B cell (primary cell): ENCODE measurements at regions of chr3 and their contacts with region 1.

Region 1: GRCh38 chr3:160027541-160028195 is 39.0 kb downstream of the IL12A start:
- DNase-seq: no peak
- ATAC-seq: no peak
- H3K4me3 ChIP-seq: no peak overlapping the region
- H3K4me3 Mint-ChIP-seq: no peak overlapping the region
- H3K27ac ChIP-seq: no peak overlapping the region
- H3K27ac Mint-ChIP-seq: no peak overlapping the region
- H3K4me1 ChIP-seq: no peaks in the 10 kb centered on the region
- H3K4me1 Mint-ChIP-seq: no peaks in the 10 kb centered on the region
- H3K27me3 ChIP-seq: no peaks in the 10 kb centered on the region
- H3K27me3 Mint-ChIP-seq: no peaks in the 10 kb centered on the region
- CTCF ChIP-seq: no peak

Region 2: DNA sequence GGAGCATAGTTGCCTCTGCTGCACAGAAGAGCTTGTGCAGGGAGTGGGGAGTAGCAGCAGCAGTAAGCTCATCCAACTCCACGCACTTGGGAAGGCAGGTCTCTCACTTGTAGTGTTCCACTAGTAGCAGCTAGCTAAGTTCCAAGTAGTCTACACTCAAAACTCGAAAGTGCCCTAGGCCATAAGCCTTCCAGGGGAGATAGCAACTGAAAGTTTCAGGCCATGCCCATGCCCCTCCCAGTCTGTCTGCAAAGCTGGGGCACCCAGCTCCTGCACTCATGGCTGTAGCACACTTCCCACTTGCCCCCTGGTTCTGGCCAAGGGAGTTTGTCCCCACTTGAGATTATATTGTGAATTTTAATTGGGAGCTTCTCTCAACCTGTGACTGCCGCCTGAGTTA is 1168.3 kb before region 1 on chr3:
- CTCF ChIA-PET with region 1: no interaction called
- POLR2A ChIA-PET with region 1: no interaction called
- intact Hi-C with region 1: no loop called
- DNase-seq: no peak
- ATAC-seq: no peak
- H3K4me3 ChIP-seq: no peak overlapping the region
- H3K4me3 Mint-ChIP-seq: no peak overlapping the region
- H3K27ac ChIP-seq: no peak overlapping the region
- H3K27ac Mint-ChIP-seq: no peak overlapping the region
- H3K4me1 ChIP-seq: no peaks in the 10 kb centered on the region
- H3K4me1 Mint-ChIP-seq: no peaks in the 10 kb centered on the region
- H3K27me3 ChIP-seq: no peaks in the 10 kb centered on the region
- H3K27me3 Mint-ChIP-seq: peaks cover 4% of the 10 kb centered on the region
- CTCF ChIP-seq: no peak

Region 3: GRCh38 chr3:160372780-160373179 is 345.1 kb after region 1 on chr3:
- CTCF ChIA-PET with region 1: no interaction called
- POLR2A ChIA-PET with region 1: interaction called, 10 read pairs
- intact Hi-C with region 1: no loop called
- DNase-seq: no peak
- ATAC-seq: no peak
- H3K4me3 ChIP-seq: no peak overlapping the region
- H3K4me3 Mint-ChIP-seq: no peak overlapping the region
- H3K27ac ChIP-seq: no peak overlapping the region
- H3K27ac Mint-ChIP-seq: no peak overlapping the region
- H3K4me1 ChIP-seq: no peaks in the 10 kb centered on the region
- H3K4me1 Mint-ChIP-seq: peaks cover 17% of the 10 kb centered on the region
- H3K27me3 ChIP-seq: no peaks in the 10 kb centered on the region
- H3K27me3 Mint-ChIP-seq: no peaks in the 10 kb centered on the region
- CTCF ChIP-seq: no peak

Region 4: DNA sequence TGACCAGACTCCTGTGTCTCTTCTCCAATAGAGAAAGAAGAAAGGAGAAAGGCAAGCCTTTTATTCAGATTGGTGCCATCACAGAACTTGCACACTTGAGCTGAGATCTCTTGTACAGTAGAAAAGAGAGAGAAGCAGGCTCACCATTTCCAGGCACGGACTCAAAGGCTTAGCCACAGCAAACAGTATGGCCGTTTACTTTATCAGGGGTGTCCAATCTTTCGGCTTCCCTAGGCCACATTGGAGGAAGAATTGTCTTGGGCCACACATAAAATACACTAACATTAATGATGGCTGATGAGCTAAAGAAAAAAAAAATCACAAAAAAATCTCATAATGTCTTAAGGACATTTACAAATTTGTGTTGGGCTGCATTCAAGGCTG is 366.3 kb after region 1 on chr3:
- CTCF ChIA-PET with region 1: interaction called, 10 read pairs
- POLR2A ChIA-PET with region 1: no interaction called
- intact Hi-C with region 1: no loop called
- DNase-seq: no peak
- ATAC-seq: no peak
- H3K4me3 ChIP-seq: no peak overlapping the region
- H3K4me3 Mint-ChIP-seq: no peak overlapping the region
- H3K27ac ChIP-seq: no peak overlapping the region
- H3K27ac Mint-ChIP-seq: no peak overlapping the region
- H3K4me1 ChIP-seq: peaks cover 7 to 8% of the 10 kb centered on the region in 2 donors
- H3K4me1 Mint-ChIP-seq: peaks cover 21% of the 10 kb centered on the region
- H3K27me3 ChIP-seq: no peaks in the 10 kb centered on the region
- H3K27me3 Mint-ChIP-seq: no peaks in the 10 kb centered on the region
- CTCF ChIP-seq: no peak

Region 5: DNA sequence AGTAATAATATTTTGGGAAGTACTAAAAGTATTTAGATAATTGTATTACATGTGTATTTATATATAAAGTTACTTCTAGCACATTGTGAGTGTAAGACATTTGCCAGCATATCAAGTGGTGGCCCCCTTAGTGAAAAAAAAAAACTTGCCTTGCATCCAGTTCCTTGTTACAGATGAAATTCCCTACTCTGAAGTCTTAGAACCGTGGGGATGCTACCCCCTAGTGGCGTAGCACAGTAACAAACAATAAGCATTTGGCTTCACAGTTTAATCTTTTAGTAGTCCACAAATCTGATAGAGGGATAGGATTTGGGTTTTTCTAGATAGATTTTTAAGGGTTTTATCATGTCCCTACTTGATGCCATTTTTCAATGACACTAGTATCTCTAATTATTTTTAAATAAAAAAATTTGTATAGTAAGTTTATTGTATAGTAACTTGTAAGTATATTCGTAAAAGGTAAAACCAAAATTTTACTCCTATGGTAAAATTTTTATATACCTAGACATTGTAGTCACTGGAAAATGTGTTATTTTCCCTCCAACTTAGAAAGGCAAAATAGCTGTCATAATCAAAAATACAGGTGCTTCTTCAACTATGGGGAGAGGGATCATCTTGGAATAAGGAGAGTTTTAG is 386.1 kb after region 1 on chr3:
- CTCF ChIA-PET with region 1: interaction called, 37 read pairs
- POLR2A ChIA-PET with region 1: no interaction called
- intact Hi-C with region 1: no loop called
- DNase-seq: peak; percentile 78
- ATAC-seq: peak; percentile 80
- H3K4me3 ChIP-seq: no peak overlapping the region
- H3K4me3 Mint-ChIP-seq: no peak overlapping the region
- H3K27ac ChIP-seq: no peak overlapping the region
- H3K27ac Mint-ChIP-seq: no peak overlapping the region
- H3K4me1 ChIP-seq: no peaks in the 10 kb centered on the region
- H3K4me1 Mint-ChIP-seq: no peaks in the 10 kb centered on the region
- H3K27me3 ChIP-seq: no peaks in the 10 kb centered on the region
- H3K27me3 Mint-ChIP-seq: no peaks in the 10 kb centered on the region
- CTCF ChIP-seq: peak; percentile 98